ENCODE measurements at regions of chr6 and their contacts with region 1.

Region 1: DNA sequence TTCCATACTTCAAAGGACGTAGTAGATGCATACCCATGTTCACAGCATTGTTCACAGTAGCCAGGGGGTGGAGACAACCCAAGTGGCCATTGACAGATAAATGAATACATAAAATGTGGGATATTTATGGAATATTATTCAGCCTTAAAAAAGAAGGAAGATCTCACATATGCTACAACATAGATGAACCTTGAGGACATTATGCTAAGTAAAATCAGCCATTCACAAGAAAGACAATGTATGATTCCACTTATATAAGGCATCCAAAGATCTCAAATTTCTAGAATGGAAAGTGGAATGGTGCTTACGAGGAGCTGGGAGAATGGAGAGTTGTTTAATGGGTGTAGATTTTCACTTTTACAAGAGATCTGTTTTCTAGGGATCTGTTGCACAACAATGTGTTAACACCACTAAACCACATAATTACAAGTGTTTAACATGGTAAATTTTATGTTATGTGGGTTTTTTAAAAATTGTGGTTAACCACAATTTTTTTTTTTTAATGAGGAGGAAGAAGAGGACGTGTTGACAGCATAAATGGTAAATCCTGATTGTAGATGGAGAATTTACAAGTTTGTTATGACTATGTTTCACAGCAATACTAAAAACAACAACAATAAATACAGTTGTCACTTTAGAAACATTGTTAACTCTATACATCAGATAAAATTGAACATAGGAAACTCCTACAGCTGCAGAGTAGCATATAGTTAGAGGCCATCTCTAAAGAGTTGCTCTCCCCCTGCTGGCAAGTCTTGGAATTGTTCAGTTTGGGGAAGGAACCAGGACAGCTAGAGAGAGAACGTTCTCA is 41.6 kb downstream of the CCN2 start:
- DNase-seq: peak; percentile 80 to 87
- H3K4me3 ChIP-seq: no peak overlapping the region
- H3K27ac ChIP-seq: no peak overlapping the region
- H3K4me1 ChIP-seq: no peaks in the 10 kb centered on the region
- H3K27me3 ChIP-seq: peaks cover 0 to 30% (median 0%) of the 10 kb centered on the region in 3 donors
- CTCF ChIP-seq: peak in 5 of 7 experiments; percentile 66 to 91 (median 85)
- EP300 ChIP-seq: no peak
- POLR2A ChIP-seq: no peak

Region 2: DNA sequence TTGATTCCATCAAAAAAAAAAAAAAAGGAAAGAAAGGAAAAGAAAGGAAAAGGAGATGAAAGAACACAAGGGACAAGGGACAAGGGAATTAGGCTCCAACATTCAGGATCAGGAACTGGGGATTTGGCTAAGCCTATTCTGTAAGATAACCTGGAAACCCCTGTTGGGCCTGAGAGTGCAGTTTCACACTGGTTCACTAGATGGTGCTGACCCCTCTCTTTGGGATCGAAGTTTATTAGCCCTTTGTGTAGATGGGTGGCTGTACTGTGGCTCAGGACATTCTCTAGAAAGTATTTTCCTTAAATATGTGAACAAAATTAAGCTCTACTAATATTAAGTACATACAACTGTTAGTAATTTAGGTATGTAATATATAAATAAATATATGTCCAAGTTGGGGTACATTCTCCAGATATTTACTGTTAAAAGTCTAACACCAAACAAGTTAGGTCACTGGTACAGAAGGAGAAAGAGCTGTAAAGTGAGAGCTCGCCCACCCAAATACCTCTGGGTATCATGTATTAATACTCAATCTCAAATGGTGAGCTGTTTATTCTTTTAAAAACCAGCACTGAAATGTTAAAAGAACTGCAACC is 214.7 kb before region 1 on chr6:
- intact Hi-C with region 1: loop called (anchors 5 kb)
- DNase-seq: peak; percentile 42 to 85
- H3K4me3 ChIP-seq: no peak overlapping the region
- H3K27ac ChIP-seq: no peak overlapping the region
- H3K4me1 ChIP-seq: no peaks in the 10 kb centered on the region
- H3K27me3 ChIP-seq: no peaks in the 10 kb centered on the region
- CTCF ChIP-seq: peak in 5 of 7 experiments; percentile 47 to 72 (median 61)
- EP300 ChIP-seq: no peak
- POLR2A ChIP-seq: no peak

Region 3: GRCh38 chr6:131831392-131831791 is 78.2 kb before region 1 on chr6:
- intact Hi-C with region 1: no loop called
- DNase-seq: no peak
- H3K4me3 ChIP-seq: no peak overlapping the region
- H3K27ac ChIP-seq: no peak overlapping the region
- H3K4me1 ChIP-seq: peaks cover 0 to 4% (median under 1%) of the 10 kb centered on the region in 4 donors
- H3K27me3 ChIP-seq: no peaks in the 10 kb centered on the region
- CTCF ChIP-seq: no peak
- EP300 ChIP-seq: no peak
- POLR2A ChIP-seq: no peak

Region 4: GRCh38 chr6:132218059-132218696 is 308.6 kb after region 1 on chr6:
- intact Hi-C with region 1: loop called (anchors 10 kb)
- DNase-seq: peak in 1 of 2 donors; percentile 49
- H3K4me3 ChIP-seq: no peak overlapping the region
- H3K27ac ChIP-seq: no peak overlapping the region
- H3K4me1 ChIP-seq: no peaks in the 10 kb centered on the region
- H3K27me3 ChIP-seq: no peaks in the 10 kb centered on the region
- CTCF ChIP-seq: peak in 3 of 7 experiments; percentile 15 to 51 (median 43)
- EP300 ChIP-seq: no peak
- POLR2A ChIP-seq: no peak